Breast epithelium (tissue), 4 donors: ENCODE measurements at regions of chr20 and their contacts with region 1.

Region 1: DNA sequence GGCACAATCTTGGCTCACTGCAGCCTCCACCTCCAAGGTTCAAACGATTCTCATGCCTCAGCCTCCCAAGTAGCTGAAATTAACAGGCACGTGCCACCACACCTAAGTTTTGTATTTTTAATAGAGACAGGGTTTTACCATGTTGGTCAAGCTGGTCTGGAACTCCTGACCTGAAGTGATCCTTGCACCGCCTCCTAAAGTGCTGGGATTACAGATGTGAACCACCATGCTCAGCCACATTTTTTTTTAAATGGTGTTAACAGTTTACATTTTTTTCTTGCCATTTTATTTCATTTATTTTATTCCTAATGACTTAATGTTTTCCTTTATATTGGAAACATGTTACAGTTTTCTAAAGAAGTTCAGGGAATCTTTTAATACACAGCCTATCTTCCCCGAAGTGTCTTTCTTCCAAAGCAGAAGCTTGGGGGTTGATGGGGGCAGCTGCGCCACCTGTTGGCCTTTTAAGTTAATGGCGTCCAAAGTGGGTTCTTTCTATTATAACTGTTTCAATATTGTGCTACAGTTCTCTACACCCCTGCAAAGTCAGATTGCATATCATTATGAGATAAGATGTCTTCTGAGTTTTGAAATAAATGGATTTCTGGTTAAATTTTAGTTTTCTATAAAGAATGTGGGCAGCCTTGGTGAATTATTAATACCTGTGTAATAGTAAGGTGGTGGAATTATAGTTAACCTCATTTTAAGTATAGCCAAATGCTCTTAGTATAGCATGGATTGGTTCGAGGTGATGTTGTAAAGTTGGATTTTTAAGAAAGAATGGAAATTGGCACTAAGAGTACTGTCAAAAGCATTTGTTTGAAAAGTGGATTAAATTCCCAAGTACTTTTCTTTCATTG is 42.0 kb upstream of the PLCG1 start:
- DNase-seq: peak in 1 of 2 donors; percentile 57
- H3K4me3 ChIP-seq: no peak overlapping the region
- H3K27ac ChIP-seq: no peak overlapping the region
- H3K4me1 ChIP-seq: no peaks in the 10 kb centered on the region
- H3K27me3 ChIP-seq: no peaks in the 10 kb centered on the region
- CTCF ChIP-seq: peak; percentile 58 to 82 (median 80)
- POLR2A ChIP-seq: no peak

Region 2: GRCh38 chr20:40781327-40782042 is 313.9 kb before region 1 on chr20:
- intact Hi-C with region 1: no loop called
- DNase-seq: no peak
- H3K4me3 ChIP-seq: no peak overlapping the region
- H3K27ac ChIP-seq: no peak overlapping the region
- H3K4me1 ChIP-seq: no peaks in the 10 kb centered on the region
- H3K27me3 ChIP-seq: peaks cover 0 to 4% of the 10 kb centered on the region in 2 donors
- CTCF ChIP-seq: no peak
- POLR2A ChIP-seq: no peak

Region 3: GRCh38 chr20:40990542-40991120 is 104.7 kb before region 1 on chr20:
- intact Hi-C with region 1: loop called (anchors 10 kb)
- DNase-seq: peak; percentile 74 to 76
- H3K4me3 ChIP-seq: no peak overlapping the region
- H3K27ac ChIP-seq: no peak overlapping the region
- H3K4me1 ChIP-seq: no peaks in the 10 kb centered on the region
- H3K27me3 ChIP-seq: no peaks in the 10 kb centered on the region
- CTCF ChIP-seq: peak; percentile 46 to 84 (median 83)
- POLR2A ChIP-seq: no peak